ENCODE measurements at regions of chr13 and their contacts with region 1.

Region 1: DNA sequence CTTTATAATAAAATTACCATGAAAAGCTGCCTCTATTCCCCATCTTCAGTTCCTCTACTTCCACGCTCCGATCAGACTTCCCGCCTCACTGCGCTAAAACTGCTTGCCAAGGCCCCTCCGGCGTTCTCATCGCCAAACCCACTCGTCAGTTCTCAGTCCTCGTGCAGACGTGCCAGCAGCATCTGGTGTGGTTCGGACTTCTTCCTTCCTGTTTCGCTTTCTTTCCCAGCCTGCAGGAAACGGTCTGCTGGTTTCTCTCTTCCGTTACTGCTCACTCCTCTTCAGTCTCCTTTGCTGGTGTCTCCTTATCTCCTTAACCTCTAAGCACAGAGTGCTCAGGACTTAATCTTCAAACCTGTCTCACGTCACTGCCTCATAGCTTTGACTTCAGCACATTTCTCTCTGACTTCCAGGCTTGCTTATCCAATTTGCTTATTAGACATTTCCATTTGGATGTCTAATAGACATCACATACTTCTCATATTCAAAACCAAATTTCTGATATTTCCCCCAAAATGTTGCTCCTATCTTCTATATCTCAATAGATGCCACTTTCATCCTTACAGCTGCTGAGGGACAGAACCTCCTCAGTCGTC is 40.3 kb downstream of the RCBTB2 start:
- H3K4me3 Mint-ChIP-seq: no peak overlapping the region
- H3K27ac Mint-ChIP-seq: no peak overlapping the region
- H3K4me1 Mint-ChIP-seq: peaks cover 23% of the 10 kb centered on the region
- H3K27me3 Mint-ChIP-seq: no peaks in the 10 kb centered on the region

Region 2: DNA sequence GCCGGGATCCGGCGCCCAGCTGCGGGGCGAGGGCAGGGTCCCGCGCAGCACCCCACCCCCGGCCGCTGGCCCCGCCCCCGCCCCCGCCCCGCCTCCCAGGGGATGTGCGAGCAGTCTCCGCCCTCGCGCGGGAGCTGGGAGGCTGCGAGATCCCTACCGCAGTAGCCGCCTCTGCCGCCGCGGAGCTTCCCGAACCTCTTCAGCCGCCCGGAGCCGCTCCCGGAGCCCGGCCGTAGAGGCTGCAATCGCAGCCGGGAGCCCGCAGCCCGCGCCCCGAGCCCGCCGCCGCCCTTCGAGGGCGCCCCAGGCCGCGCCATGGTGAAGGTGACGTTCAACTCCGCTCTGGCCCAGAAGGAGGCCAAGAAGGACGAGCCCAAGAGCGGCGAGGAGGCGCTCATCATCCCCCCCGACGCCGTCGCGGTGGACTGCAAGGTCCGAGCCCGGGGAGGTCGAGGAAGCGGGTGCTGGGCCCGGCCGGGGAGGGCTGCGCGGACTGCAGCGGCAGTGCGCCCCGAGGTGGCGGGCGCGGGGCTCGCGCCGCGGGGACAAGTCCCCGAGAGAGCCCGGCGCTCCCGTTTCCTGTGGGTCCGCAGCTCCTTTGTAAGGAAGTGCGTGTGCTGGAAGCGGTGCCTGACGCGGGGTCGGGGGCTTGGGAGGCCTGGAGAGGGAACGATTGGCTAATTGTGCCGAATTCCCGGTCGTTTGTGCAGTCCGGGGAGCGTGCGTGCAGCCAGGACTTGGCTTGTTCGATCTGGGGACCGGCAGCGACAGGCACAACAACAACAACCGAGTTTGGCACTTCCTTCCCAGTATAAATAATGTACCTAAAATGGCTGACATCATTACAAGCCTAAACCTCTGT is 259.3 kb before region 1 on chr13 and contains the start of gene ITM2B:
- intact Hi-C with region 1: no loop called
- H3K4me3 Mint-ChIP-seq: peak within 1 kb of the TSS; percentile 87
- H3K27ac Mint-ChIP-seq: peak within 1 kb of the TSS; percentile 94
- H3K4me1 Mint-ChIP-seq: peaks cover 26% of the 10 kb centered on the region
- H3K27me3 Mint-ChIP-seq: peaks cover 11% of the 10 kb centered on the region

Region 3: DNA sequence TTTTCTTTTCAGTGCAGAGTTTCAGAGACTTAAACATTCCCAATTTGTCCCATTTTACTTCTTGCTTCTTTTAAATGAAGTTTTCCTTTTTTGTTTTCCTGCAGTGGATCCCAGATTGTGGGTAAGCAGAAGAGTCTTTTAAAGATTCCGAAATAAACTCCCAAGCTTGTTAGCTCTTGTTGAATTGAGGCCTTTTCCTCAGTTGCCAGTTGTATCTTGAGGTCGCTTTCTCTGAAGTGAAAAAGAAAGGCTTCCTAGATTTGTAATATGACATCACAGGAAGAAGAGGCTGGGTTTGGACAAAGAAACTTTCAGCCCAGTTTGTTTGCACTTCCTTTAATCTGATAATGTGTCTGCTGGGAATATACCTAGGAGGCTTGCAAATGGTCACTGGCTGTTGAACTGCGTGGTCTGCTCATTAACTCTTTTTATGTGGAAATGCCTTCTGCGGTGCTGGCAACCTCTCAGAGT is 79.7 kb before region 1 on chr13 and contains the start of gene LPAR6:
- intact Hi-C with region 1: loop called (anchors 5 kb)
- H3K4me3 Mint-ChIP-seq: peak within 1 kb of the TSS; percentile 83
- H3K27ac Mint-ChIP-seq: peak within 1 kb of the TSS; percentile 88
- H3K4me1 Mint-ChIP-seq: no peaks in the 10 kb centered on the region
- H3K27me3 Mint-ChIP-seq: no peaks in the 10 kb centered on the region

Region 4: GRCh38 chr13:48505597-48506091 is 13.1 kb after region 1 on chr13:
- intact Hi-C with region 1: loop called (anchors 1 kb)
- H3K4me3 Mint-ChIP-seq: peak overlapping the region; percentile 56
- H3K27ac Mint-ChIP-seq: peak overlapping the region; percentile 96
- H3K4me1 Mint-ChIP-seq: peaks cover 87% of the 10 kb centered on the region
- H3K27me3 Mint-ChIP-seq: no peaks in the 10 kb centered on the region

Region 5: DNA sequence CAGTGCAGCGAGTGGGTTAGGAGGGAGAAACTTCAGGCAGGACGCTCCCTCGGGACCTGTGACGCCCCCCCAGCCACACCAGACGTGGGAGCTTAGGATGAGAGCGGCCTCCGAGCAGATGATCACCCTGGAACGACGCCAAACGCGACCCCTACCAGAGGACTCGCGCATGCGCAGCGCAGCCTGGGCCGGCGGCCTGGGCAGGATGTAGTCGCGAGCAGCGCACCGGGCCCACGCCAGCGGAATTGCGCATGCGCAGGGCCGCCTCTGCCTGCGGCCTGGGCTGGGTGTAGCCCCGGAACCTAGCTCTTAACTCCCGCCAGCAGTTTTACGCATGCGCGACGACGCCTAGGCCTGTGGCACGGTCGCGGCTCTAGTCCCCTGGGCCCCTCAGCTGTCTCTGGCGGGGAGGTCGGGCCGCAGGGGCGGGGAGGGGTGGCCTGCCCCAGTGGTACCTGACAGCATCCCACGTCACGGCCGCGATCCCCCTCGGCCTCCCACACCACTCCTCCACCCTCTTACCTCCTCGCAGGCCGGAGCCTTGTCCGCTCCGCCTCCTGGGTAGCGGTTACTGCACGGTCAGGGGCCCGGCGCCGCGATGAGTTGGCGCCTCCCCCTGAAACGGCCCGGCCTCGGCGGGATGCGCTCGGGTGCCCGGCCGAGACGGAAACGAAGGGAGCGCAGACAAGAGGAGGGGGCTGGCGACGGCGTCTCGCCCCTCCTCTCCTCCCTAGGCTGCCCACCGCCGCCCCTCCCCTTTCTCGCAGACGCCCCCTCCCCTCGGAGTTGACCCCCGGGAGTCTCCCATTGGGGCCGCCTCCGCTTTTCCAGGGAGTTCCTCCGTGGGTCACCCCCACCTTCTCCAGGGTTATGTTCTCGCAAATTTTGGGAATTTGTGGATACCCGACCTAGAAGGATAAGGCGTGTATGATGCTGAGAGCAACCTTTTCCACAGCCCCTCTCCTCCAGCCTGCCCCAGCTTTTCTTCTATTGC is 40.2 kb after region 1 on chr13 and contains the start of gene RCBTB2:
- intact Hi-C with region 1: loop called (anchors 5 kb)
- H3K4me3 Mint-ChIP-seq: peak within 1 kb of the TSS; percentile 83
- H3K27ac Mint-ChIP-seq: peak within 1 kb of the TSS; percentile 98
- H3K4me1 Mint-ChIP-seq: peaks cover 69% of the 10 kb centered on the region
- H3K27me3 Mint-ChIP-seq: no peaks in the 10 kb centered on the region

Region 6: DNA sequence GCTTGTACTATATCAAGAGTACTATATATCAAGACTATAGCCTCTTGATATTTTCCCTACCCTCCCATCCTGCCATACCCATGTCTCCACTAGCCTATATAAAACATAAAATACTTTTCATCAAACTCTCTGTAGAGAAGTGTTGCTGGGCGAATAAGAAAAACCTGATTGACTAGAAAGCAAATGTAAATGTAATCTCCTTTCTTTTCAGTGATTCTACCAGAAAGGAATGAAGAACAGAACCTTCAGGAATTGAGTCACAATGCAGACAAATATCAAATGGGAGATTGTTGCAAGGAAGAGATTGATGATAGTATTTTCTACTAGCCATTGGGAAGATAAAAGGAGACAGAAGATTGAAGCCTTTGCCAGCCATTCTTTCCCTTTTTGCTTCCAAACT is 1611.9 kb after region 1 on chr13:
- intact Hi-C with region 1: no loop called
- H3K4me3 Mint-ChIP-seq: no peak overlapping the region
- H3K27ac Mint-ChIP-seq: no peak overlapping the region
- H3K4me1 Mint-ChIP-seq: peaks cover 47% of the 10 kb centered on the region
- H3K27me3 Mint-ChIP-seq: no peaks in the 10 kb centered on the region

Measured in dendritic cell treated with granulocyte-macrophage colony-stimulating factor and Interleukin-4, amounts not matched to agents 40 ng/mL and 50 ng/mL, for 4 days (primary cell).